Sciatic nerve (tissue), 2 donors: ENCODE measurements at regions of chr15 and their contacts with region 1.

Region 1: GRCh38 chr15:75651277-75652033 is 3.7 kb downstream of the SNX33 start:
- DNase-seq: no peak
- ATAC-seq: no peak

Region 2: GRCh38 chr15:75666823-75667501 is 15.5 kb after region 1 on chr15:
- intact Hi-C with region 1: loop called (anchors 1 kb)
- DNase-seq: no peak
- ATAC-seq: peak; percentile 46